Ascending aorta (tissue), 2 donors: ENCODE measurements at regions of chr3 and their contacts with region 1.

Region 1: DNA sequence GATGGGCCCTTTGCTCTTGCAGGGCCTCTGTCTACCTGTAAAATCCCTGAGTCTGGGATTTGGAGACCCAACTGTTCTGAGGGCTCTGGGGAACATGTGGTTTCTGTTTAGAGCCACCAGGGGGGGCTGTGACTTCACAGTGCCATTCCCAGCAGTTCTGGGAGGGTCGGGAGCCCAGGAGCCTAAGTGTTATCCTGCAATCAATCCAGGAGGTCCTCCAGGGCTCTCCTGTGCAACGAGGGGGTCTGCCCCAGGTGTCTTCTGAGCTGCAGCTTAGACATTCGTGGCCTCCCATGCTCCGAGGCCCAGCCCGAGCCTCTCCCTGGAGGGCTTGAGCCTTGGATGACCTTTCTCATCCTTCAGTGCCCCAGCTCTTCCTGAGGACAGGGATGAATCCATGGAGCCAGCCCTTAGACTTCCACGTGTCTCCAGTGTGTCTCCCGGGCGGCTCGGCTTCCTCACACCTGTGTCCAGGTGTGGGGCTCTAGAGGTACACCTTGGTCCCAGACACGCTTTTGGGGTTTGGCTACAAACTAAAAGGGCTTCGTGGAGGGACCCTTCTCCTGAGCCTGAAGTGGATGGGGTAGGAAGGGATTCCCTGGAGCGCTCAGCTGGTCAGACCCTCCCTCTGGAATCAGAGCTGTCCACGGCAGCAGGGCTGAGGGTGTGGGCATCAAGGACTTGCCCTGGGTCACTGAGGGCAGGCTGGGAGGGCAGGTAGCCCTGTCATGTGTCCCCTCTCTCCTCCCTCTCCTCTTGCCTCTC is 20.3 kb upstream of the ABTB1 start:
- DNase-seq: peak in 1 of 2 donors; percentile 70
- H3K4me3 ChIP-seq: no peak overlapping the region
- H3K27ac ChIP-seq: no peak overlapping the region
- H3K4me1 ChIP-seq: peaks cover 0 to 17% of the 10 kb centered on the region in 2 donors
- H3K27me3 ChIP-seq: no peaks in the 10 kb centered on the region
- CTCF ChIP-seq: peak; percentile 89 to 94 (median 91)

Region 2: GRCh38 chr3:127560051-127560787 is 92.2 kb before region 1 on chr3:
- intact Hi-C with region 1: no loop called
- DNase-seq: no peak
- H3K4me3 ChIP-seq: no peak overlapping the region
- H3K27ac ChIP-seq: no peak overlapping the region
- H3K4me1 ChIP-seq: no peaks in the 10 kb centered on the region
- H3K27me3 ChIP-seq: no peaks in the 10 kb centered on the region
- CTCF ChIP-seq: no peak

Region 3: GRCh38 chr3:127690823-127691452 is 38.5 kb after region 1 on chr3:
- intact Hi-C with region 1: loop called (anchors 2 kb)
- DNase-seq: no peak
- H3K4me3 ChIP-seq: no peak overlapping the region
- H3K27ac ChIP-seq: peak overlapping the region; percentile 85 to 89
- H3K4me1 ChIP-seq: peaks cover 29 to 32% of the 10 kb centered on the region in 2 donors
- H3K27me3 ChIP-seq: no peaks in the 10 kb centered on the region
- CTCF ChIP-seq: peak; percentile 60 to 73 (median 71)

Region 4: GRCh38 chr3:127857333-127857732 is 204.9 kb after region 1 on chr3:
- intact Hi-C with region 1: loop called (anchors 2 kb)
- DNase-seq: no peak
- H3K4me3 ChIP-seq: no peak overlapping the region
- H3K27ac ChIP-seq: no peak overlapping the region
- H3K4me1 ChIP-seq: no peaks in the 10 kb centered on the region
- H3K27me3 ChIP-seq: no peaks in the 10 kb centered on the region
- CTCF ChIP-seq: peak in 1 of 3 experiments; percentile 28

Region 5: GRCh38 chr3:127970966-127971592 is 318.7 kb after region 1 on chr3:
- intact Hi-C with region 1: loop called (anchors 1 kb)
- DNase-seq: no peak
- H3K4me3 ChIP-seq: no peak overlapping the region
- H3K27ac ChIP-seq: no peak overlapping the region
- H3K4me1 ChIP-seq: no peaks in the 10 kb centered on the region
- H3K27me3 ChIP-seq: no peaks in the 10 kb centered on the region
- CTCF ChIP-seq: peak; percentile 53 to 70 (median 59)

Region 6: GRCh38 chr3:128051837-128052594 is 399.6 kb after region 1 on chr3 and contains the start of gene SEC61A1:
- intact Hi-C with region 1: loop called (anchors 2 kb)
- DNase-seq: peak; percentile 81 to 96
- H3K4me3 ChIP-seq: peak within 1 kb of the TSS; percentile 94 to 98
- H3K27ac ChIP-seq: peak within 1 kb of the TSS; percentile 96
- H3K4me1 ChIP-seq: peaks cover 15 to 29% of the 10 kb centered on the region in 2 donors
- H3K27me3 ChIP-seq: no peaks in the 10 kb centered on the region
- CTCF ChIP-seq: peak in 1 of 3 experiments; percentile 4
- total RNA-seq, gene SEC61A1: 193 TPM